ENCODE measurements at regions of chr1 and their contacts with region 1.

Region 1: DNA sequence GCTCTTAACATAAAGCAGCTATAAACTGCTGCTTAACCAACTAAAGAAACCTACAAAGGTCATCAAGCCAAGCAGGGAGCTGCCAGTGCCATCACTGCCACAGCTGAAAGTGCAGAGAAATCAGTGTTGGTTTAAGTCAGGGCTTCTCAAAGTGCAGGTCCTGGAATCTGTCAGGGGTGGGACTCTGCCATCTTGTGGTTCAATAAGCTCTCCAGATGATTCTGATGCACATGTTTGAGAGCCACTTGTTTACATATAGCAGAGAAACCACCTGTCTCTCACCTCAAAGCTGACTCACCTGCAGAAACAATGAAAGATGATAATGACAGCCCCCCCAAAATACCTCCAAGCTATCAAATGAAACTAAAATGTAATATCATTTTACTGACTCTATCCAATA is 49.3 kb downstream of the SH3GLB1 start:
- DNase-seq: no peak
- CTCF ChIP-seq: peak; percentile 7

Region 2: DNA sequence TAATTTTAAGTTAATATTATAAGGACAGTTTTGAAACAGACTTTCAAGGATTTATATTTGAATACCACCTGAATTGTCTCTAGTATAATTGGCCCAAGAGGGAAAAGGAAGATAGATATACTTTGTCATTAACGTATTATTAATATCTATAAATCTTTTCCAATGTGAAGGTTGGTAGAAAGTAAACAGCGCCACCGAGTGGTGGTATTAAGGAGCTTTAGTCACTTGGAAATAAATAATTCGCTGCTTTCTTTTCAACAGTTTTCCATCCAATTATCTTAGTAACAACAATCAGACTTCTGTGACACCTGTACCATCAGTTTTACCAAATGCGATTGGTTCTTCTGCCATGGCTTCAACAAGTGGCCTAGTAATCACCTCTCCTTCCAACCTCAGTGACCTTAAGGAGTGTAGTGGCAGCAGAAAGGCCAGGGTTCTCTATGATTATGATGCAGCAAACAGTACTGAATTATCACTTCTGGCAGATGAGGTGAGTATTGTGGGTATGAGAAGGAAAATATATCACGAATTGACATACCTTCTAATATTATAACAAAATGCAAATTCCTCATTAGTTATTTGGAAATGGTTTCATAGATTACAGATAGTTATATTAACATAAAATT is 11.6 kb before region 1 on chr1:
- CTCF ChIA-PET with region 1: interaction called, 13 read pairs
- POLR2A ChIA-PET with region 1: no interaction called
- DNase-seq: no peak
- CTCF ChIP-seq: peak; percentile 56

Region 3: DNA sequence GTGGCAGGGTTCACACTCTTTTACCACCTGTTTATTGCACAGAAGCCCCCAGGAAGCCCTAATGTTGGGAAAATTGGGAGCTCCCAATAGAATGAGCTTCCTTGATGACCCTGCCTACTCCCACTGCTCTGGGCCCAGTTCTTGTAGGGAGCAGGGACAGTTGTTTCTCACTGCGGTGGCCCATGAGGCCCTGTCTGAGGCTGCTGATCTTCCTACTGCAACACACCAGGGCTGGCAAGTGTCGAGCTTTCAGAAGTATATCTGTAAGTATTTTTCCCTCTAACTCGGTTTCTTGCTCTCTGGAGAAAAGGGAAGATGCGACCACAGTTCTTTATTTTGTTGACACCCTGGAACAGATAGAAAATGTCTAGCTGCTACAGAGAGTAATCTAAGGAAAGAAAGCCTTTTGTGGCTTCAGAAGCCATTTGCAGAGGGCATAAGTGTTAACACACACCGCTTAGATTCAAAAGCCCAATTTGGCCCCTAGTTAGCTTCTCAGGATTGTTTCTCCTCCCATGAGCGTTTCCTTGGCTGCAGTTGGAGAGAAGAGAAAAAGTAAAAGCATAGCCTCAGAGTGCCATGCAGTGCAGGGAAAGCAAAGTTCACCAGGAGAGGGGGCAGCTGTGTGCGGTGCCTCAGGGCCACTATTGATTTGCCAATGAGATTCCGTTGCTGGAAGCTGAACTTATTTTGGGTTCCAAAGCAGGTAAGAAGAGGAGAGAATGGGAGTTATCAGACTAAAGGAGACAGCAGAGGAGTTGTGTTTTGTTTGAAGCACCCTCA is 57.6 kb after region 1 on chr1:
- CTCF ChIA-PET with region 1: no interaction called
- POLR2A ChIA-PET with region 1: no interaction called
- DNase-seq: no peak
- CTCF ChIP-seq: no peak

Measured in GM10248 (cell line).